Dorsolateral prefrontal cortex (tissue), 120 donors: ENCODE measurements at regions of chr2 and their contacts with region 1.

Region 1: DNA sequence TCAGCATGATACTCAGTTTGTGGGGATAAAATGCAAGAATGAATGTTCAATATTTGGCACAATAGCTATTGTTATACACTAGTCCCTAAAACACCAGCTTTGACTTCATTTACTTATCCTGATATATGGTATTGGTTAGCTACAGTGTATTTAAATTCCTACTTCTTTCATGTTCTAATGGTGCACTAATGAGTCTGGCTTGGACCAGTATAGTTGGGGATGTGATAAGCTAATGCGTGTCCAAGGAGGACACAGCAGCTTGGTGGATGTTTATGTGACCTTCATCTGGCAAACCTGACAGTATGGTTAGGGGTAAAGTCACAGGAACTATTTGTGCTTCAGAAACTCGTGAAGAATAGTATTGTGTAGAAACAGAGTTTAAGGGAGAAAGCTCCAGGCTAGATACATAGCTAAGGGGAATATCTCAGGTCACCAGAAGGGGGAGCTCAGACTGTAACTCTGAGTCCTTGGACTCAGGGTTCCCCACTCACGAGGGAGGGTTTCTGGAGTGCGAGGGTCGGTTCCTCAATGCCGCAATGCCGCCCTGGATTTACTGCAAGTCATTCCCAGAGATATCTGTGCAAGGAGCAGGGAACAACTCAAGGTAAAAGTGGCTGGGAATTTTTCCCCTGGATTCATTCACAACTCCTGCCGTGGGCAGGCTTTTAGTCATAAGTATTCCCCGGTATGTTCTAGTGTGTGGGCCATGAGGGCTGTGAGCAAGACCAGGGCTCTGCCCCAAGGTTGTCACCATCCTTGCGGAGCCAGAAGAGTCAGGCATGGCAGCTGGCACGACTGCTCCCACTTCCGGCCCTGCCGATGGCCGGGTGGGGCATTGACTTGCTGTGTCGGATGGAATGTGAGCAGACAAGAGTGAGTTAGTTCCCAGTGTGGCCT is 14.5 kb downstream of the IL1R2 start:
- DNase-seq: no peak
- H3K4me3 ChIP-seq: no peak overlapping the region
- H3K27ac ChIP-seq: no peak overlapping the region
- H3K27me3 ChIP-seq: peaks cover 0 to 2% (median 0%) of the 10 kb centered on the region in 45 donors
- CTCF ChIP-seq: peak in 55 of 56 donors; percentile 17 to 68 (median 52)

Region 2: GRCh38 chr2:101282980-101283379 is 723.3 kb before region 1 on chr2:
- intact Hi-C with region 1: no loop called
- DNase-seq: no peak
- H3K4me3 ChIP-seq: no peak overlapping the region
- H3K27ac ChIP-seq: peak overlapping the region in 4 of 59 donors; percentile 8 to 50 (median 27)
- H3K27me3 ChIP-seq: no peaks in the 10 kb centered on the region
- CTCF ChIP-seq: no peak

Region 3: GRCh38 chr2:102442967-102443828 is 437.0 kb after region 1 on chr2:
- intact Hi-C with region 1: loop called in 1 of 2 experiments (anchors 10 kb)
- DNase-seq: peak in 2 of 10 donors; percentile 31 to 34
- H3K4me3 ChIP-seq: no peak overlapping the region
- H3K27ac ChIP-seq: no peak overlapping the region
- H3K27me3 ChIP-seq: peaks cover 0 to 12% (median 0%) of the 10 kb centered on the region in 45 donors
- CTCF ChIP-seq: peak; percentile 45 to 81 (median 68)